Activated CD4-positive, alpha-beta T cell treated with anti-CD3 and anti-CD28 coated beads, Interleukin-2, amount 10 ng/mL, durations not matched to agents 24 days and 14 days (primary cell): ENCODE measurements at regions of chr10 and their contacts with region 1.

Region 1: DNA sequence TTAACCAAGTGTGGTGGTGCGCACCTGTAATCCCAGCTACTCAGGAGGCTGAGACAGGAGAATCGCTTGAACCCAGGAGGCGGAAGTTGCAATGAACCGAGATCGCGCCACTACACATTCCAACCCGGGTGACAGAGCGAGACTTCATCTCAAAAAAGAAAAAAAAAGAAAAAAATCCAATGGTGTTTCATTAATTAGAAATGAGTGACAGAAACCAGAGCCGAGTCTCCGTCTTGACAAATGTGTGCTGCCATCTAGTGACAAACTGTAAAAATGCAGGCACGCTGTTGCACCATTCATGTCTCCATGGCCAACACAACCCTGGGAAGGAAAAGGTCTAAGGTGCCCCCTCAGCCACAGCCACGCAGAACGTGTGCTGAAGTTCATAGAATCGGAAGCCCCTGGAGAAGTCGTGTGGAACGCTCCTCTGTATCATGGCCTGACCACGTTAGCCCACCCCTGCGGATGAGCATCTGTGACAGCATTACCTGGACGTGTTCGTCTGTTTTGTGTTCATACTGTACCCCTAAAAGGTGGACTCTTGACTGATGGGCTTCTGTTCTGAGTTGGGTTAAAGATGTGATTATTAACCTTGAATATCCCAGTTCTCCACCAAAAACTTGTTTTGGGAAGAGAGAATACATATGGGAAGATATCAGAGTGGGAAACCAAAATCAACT is 94.9 kb downstream of the LYZL2 start:
- DNase-seq: peak; percentile 92
- H3K4me3 Mint-ChIP-seq: no peak overlapping the region
- H3K27ac Mint-ChIP-seq: peak overlapping the region; percentile 61
- H3K4me1 Mint-ChIP-seq: peaks cover 40% of the 10 kb centered on the region
- H3K27me3 Mint-ChIP-seq: peaks cover 2% of the 10 kb centered on the region

Region 2: DNA sequence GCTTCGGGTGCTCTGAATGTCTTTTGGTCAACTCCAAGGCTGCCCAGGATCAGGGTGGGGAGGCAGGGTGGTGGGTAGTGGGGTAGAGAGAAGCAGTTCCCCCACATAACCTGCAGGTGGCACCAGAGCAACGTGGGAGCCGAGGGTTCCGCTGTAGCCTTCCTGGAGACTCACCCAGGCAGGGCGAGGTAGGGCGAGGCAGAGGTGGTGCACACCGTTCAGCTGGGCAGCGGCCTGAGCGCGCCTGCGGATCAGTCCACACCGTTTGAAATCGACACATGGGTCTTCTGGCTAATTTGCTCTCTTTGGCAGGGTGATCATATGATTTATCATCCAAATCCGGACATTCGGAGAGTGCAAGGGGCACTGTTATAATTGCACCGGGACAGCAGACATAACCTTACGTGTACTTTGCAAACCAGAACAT is 142.0 kb before region 1 on chr10:
- intact Hi-C with region 1: loop called (anchors 1 kb)
- DNase-seq: peak; percentile 92
- H3K4me3 Mint-ChIP-seq: peak overlapping the region; percentile 31
- H3K27ac Mint-ChIP-seq: no peak overlapping the region
- H3K4me1 Mint-ChIP-seq: peaks cover 2% of the 10 kb centered on the region
- H3K27me3 Mint-ChIP-seq: peaks cover 22% of the 10 kb centered on the region